PC-3 (cell line): ENCODE measurements at regions of chr4 and their contacts with region 1.

Region 1: GRCh38 chr4:182488896-182489295 is 245.7 kb downstream of the TENM3 start:
- DNase-seq: no peak
- ATAC-seq: peak; percentile 55
- H3K4me3 ChIP-seq: no peak overlapping the region
- H3K27ac ChIP-seq: no peak overlapping the region
- H3K4me1 ChIP-seq: no peaks in the 10 kb centered on the region
- H3K27me3 ChIP-seq: no peaks in the 10 kb centered on the region
- CTCF ChIP-seq: no peak

Region 2: DNA sequence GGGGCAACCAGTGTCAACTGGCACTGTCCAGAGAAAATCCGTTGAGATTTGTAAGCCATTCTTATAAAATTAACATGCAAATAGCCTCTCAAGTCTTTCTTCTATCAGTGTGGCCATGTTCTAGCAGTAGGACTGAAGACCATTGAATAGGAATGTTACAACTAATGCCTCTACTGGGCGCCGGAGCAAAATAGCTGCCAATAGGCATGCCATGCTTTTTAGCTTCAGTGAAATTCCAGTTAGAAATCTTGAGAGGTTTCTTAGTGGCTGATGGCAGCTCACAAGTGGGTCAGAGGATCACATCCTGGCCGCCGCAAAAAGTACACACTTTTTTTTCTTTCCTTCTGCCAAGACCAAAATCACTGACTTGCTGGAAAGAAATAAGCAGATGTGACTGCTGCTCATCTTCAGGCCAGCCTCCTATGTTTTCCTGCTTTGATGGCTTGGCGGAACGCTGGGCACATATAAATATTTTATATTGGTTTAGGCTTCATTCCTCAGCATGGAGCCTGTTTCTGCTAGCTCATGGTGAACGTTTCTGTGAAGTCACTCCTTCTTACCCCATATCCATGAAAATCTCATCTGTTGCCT is 47.4 kb after region 1 on chr4:
- CTCF ChIA-PET with region 1: no interaction called
- POLR2A ChIA-PET with region 1: no interaction called
- intact Hi-C with region 1: loop called (anchors 2 kb)
- DNase-seq: no peak
- ATAC-seq: no peak
- H3K4me3 ChIP-seq: no peak overlapping the region
- H3K27ac ChIP-seq: no peak overlapping the region
- H3K4me1 ChIP-seq: no peaks in the 10 kb centered on the region
- H3K27me3 ChIP-seq: no peaks in the 10 kb centered on the region
- CTCF ChIP-seq: no peak